ENCODE measurements at regions of chr17 and their contacts with region 1.

Region 1: DNA sequence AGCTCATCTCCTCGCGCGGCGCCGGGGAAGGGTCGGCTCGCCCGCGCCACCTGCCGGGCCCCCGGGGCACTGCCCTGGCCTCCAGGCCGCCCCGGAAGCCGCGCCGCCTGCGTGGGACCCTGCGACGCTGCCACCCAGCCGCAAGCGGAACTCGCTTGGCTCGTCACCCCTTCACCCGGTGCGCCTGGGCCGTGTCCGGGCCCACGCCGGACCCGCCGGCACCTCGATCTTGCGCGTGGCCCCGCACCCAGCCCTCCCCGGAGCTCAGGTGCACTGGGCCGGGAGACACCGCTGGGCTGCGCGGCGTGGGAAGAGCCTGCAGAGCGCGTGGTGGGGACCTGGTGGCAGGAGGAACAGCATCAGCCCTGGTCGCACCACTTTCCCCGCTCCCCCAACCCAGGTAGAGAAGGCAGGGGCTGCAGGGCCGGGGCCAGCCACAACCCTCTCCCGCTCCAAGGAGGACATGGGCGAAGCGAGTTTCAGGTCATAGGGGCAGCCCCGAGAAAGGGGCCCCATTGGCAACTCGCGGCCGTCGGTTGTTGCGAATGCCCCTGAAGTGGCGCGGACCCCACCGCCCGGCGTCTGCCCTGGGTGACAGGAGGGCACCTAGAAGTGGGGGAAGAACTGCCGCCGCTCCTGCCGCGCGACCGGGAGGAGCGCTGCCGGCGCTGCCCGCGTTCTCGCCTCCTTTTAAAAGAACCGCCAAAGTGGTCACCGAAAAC is 363 bp upstream of the MIF4GD start:
- DNase-seq: peak; percentile 79 to 92 (median 90)
- ATAC-seq: peak; percentile 83 to 88
- H3K4me3 Mint-ChIP-seq: peak overlapping the region; percentile 76 to 91 (median 84)
- H3K27ac Mint-ChIP-seq: peak overlapping the region; percentile 65 to 93 (median 90)
- H3K4me1 Mint-ChIP-seq: peaks cover 13 to 34% (median 28%) of the 10 kb centered on the region in 4 donors
- H3K27me3 Mint-ChIP-seq: no peaks in the 10 kb centered on the region

Region 2: GRCh38 chr17:74873038-74873873 is 398.1 kb before region 1 on chr17:
- POLR2A ChIA-PET with region 1: interaction called, 12 read pairs
- DNase-seq: peak; percentile 97 to 100 (median 99)
- ATAC-seq: peak; percentile 95 to 96
- H3K4me3 Mint-ChIP-seq: peak overlapping the region; percentile 83 to 98 (median 94)
- H3K27ac Mint-ChIP-seq: peak overlapping the region; percentile 92 to 99 (median 98)
- H3K4me1 Mint-ChIP-seq: peaks cover 16 to 25% (median 23%) of the 10 kb centered on the region in 4 donors
- H3K27me3 Mint-ChIP-seq: no peaks in the 10 kb centered on the region

Region 3: GRCh38 chr17:75289115-75289831 is 17.9 kb after region 1 on chr17 and contains the start of gene SLC25A19:
- POLR2A ChIA-PET with region 1: interaction called, 127 read pairs
- DNase-seq: peak; percentile 86 to 99 (median 96)
- ATAC-seq: peak; percentile 90 to 92
- H3K4me3 Mint-ChIP-seq: peak within 1 kb of the TSS; percentile 95 to 100 (median 100)
- H3K27ac Mint-ChIP-seq: peak within 1 kb of the TSS; percentile 98 to 100 (median 100)
- H3K4me1 Mint-ChIP-seq: peaks cover 10 to 24% (median 19%) of the 10 kb centered on the region in 4 donors
- H3K27me3 Mint-ChIP-seq: no peaks in the 10 kb centered on the region
- polyA plus RNA-seq, gene SLC25A19: 11.2 to 15.4 (median 13.3) TPM